ENCODE measurements at regions of chr11 and their contacts with region 1.

Region 1: DNA sequence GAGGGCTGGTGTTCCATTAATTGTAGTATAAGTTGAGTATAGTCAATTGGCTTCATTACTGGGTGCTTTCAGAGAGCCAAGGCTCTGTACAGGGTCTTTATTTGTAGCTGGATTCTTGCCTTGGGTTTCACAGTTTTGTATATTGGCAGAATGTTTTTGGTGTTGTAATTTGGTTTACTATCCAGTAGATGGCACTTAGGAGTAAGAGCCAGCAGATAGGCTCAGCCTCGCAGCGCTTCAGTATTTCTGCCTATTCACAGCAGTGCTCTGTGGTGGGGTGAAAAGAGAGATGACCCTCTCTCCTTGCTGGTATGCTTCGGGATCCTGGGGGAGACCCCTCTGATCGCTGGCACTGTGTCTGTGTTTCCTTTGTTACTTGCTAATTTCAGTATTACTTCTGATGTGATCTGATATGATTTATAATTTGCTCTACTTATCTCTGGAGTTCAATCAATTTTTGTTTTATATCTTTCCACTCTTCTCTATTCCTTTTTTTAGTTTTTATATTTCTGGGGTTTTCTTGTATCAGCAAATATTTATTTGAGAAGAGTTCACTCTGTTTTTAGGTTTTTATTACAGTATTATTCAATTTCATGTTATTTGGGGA is 52.2 kb downstream of the ANO5 start:
- DNase-seq: peak; percentile 28
- ATAC-seq: peak; percentile 90
- H3K4me3 ChIP-seq: no peak overlapping the region
- H3K27ac ChIP-seq: no peak overlapping the region
- H3K4me1 ChIP-seq: no peaks in the 10 kb centered on the region
- H3K27me3 ChIP-seq: no peaks in the 10 kb centered on the region
- CTCF ChIP-seq: peak; percentile 84

Region 2: DNA sequence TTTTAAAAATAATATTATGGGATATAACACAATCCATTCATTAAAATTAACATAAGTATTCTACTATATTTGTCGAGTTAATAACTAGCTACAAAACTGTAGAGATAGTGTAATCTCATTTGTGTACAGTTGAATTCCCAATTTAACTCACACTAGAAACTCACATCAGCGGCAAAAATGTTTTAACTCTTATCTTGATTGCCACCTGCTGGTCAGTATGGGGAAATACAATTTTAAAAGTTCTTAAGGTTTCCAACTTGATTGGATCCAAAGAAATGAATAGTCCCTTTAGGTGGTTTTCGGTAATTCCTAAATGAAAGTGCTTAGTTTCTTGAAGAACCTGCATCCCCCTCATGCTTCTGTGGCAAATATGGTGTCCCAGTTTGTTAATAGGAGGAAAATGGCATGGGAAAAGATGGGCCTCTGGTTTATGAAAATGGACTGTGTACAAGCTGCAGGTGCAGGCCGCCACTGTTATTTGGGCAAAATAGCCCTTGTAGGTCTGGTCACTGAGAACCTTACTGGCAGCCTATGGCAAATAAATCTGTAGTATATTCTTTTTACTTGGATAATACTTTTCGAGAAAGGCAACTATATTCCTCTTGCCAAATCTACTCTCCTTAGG is 59.4 kb after region 1 on chr11:
- CTCF ChIA-PET with region 1: interaction called, 5 read pairs
- POLR2A ChIA-PET with region 1: no interaction called
- in situ Hi-C with region 1: no loop called
- intact Hi-C with region 1: loop called (anchors 2 kb)
- DNase-seq: peak; percentile 7
- ATAC-seq: no peak
- H3K4me3 ChIP-seq: no peak overlapping the region
- H3K27ac ChIP-seq: no peak overlapping the region
- H3K4me1 ChIP-seq: no peaks in the 10 kb centered on the region
- H3K27me3 ChIP-seq: 0 out of 2 replicates have a peak, but pooled peaks cover 2% of the 10 kb centered on the region
- CTCF ChIP-seq: peak; percentile 68

Region 3: DNA sequence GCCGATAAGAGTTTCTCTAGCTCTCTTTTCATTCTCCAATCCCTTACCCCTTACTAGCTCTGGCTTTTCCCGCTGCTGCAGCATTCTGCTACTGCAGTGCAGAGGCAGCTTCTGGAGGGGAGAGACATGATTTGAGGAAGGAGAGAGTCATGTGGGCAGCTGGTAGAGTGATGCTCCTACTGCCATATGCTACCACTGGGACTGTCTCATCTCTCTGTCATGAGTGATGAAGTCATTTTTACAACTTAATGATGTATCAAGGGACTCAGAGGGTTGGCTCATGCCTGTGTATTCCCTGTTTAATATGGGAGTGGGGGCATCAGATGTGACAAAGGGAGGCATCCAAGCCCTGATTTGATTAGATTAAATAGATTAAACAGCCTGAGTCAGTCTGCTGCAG is 104.4 kb after region 1 on chr11:
- CTCF ChIA-PET with region 1: no interaction called
- POLR2A ChIA-PET with region 1: no interaction called
- in situ Hi-C with region 1: no loop called
- intact Hi-C with region 1: no loop called
- DNase-seq: no peak
- ATAC-seq: no peak
- H3K4me3 ChIP-seq: no peak overlapping the region
- H3K27ac ChIP-seq: no peak overlapping the region
- H3K4me1 ChIP-seq: no peaks in the 10 kb centered on the region
- H3K27me3 ChIP-seq: peaks cover 2% of the 10 kb centered on the region
- CTCF ChIP-seq: no peak

Region 4: DNA sequence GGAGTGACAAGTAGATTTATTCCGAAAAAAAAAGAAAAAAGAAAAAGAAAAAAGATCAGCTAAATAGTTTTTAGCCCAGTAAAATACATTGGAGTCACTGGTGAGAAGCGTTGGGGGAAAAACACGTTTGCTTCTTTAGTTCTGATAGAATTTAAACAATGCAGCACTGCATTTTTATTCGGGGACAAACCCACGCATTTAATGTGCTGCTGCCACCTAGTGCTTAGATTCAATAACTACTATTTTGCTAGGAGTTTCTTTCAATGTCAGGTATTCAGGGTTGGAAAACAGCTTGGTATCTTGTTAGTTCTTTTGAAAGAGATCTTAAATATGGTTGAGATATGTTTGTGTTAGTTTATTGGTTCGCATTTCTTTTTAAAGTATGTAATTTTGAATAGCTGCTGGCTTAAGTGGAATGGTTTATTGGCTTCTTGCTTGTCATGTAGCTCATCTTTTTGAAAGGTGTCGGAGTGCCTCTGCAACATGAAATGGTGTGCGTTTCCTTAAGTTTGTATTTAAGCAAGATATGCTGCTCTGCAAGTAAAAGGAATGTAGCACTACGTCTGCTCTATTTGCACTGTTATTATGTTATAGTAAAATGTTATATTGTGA is 542.6 kb after region 1 on chr11:
- CTCF ChIA-PET with region 1: interaction called, 4 read pairs
- POLR2A ChIA-PET with region 1: no interaction called
- in situ Hi-C with region 1: no loop called
- intact Hi-C with region 1: loop called (anchors 10 kb)
- DNase-seq: no peak
- ATAC-seq: peak; percentile 65; the same call in 1 of the 2 replicates
- H3K4me3 ChIP-seq: no peak overlapping the region
- H3K27ac ChIP-seq: no peak overlapping the region
- H3K4me1 ChIP-seq: no peaks in the 10 kb centered on the region
- H3K27me3 ChIP-seq: no peaks in the 10 kb centered on the region; the same call in 1 of the 2 replicates
- CTCF ChIP-seq: peak; percentile 74; the same call in 1 of the 2 replicates

Measured in Panc1 (cell line).